ENCODE measurements at regions of chr4 and their contacts with region 1.

Region 1: GRCh38 chr4:78644744-78645330 is 93.3 kb downstream of the ANXA3 start:
- DNase-seq: no peak
- H3K4me3 ChIP-seq: no peak overlapping the region
- CTCF ChIP-seq: peak; percentile 80

Region 2: GRCh38 chr4:78634011-78634664 is 10.7 kb before region 1 on chr4:
- CTCF ChIA-PET with region 1: interaction called, 72 read pairs
- POLR2A ChIA-PET with region 1: no interaction called
- DNase-seq: no peak
- H3K4me3 ChIP-seq: no peak overlapping the region
- CTCF ChIP-seq: no peak

Region 3: GRCh38 chr4:78864405-78865024 is 219.7 kb after region 1 on chr4:
- CTCF ChIA-PET with region 1: interaction called, 29 read pairs
- POLR2A ChIA-PET with region 1: no interaction called
- DNase-seq: peak; percentile 38
- H3K4me3 ChIP-seq: no peak overlapping the region
- CTCF ChIP-seq: peak; percentile 41